ENCODE measurements at regions of chr22 and their contacts with region 1.

Region 1: DNA sequence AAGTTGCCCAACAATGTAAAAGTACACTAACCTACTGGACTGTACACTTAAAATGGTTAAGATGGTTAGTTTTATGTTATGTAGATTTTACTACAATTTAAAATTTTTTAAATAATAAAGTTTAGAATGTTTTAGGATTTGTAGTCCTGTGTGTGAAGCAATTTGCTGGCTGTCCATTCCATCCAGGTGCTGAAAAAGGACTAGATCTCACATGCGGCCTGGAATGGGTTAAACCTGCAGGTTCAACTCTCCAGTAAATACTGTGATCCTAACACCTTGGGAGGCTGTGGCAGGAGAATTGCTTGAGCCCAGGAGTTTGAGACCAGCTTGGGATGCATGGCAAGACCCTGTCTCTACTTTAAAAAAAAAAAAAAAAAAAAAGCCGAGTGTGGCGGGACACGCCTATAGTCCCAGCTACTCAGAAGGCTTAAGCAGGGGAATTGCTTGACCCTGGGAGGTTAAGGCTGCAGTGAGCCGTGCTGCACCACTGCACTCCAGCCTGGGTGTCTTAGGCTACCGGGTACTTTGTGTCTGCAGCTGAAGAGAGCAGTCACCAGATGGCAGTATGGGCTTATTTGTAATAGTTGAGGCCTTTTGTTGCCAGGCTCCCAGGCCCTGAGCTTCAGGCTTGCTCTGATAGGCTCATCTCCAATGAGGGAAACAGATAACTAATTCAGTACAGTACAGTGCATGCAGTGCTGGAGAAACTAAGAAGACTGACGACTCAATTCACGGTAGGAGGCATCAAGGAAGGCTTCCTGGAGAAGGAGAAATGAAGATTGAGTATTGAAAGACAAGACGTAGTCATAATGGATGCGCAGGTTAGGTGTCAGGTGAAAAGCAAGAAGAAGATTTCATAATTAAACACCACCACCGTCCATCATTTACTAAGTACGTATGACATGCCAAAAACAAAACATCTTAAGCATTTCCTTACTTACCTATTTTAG is 64.7 kb upstream of the ASPHD2 start:
- DNase-seq: peak; percentile 75
- H3K4me3 ChIP-seq: no peak overlapping the region
- H3K27ac ChIP-seq: no peak overlapping the region
- H3K4me1 ChIP-seq: no peaks in the 10 kb centered on the region
- H3K27me3 ChIP-seq: peaks cover 0 to 4% of the 10 kb centered on the region in 2 experiments
- CTCF ChIP-seq: peak; percentile 59 to 77
- POLR2A ChIP-seq: no peak

Region 2: DNA sequence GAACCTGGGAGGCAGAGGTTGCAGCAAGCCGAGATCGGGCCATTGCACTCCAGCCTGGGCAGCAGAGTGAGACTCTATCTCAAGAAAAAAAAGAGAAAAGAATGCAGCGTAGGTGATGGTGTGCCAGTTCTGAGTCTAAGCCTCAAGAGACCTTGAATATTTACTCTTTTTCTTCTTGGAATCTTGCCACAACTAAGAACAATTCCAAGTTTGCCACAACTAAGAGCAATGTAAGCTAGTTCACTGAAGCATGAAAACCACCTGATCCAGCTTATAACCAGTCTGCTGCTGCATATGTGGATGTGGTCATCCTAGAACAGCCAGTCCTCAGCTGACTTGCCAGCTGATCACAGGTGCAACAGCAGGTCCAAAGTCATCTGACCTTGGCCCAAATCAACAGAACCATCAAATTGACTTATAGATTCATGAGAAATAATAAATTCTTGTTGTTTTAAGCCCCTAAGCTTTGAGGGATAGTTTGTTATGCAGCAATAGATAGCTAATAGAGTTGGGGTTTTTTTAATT is 220.5 kb before region 1 on chr22:
- CTCF ChIA-PET with region 1: no interaction called
- POLR2A ChIA-PET with region 1: no interaction called
- dilution Hi-C with region 1: no loop called
- intact Hi-C with region 1: no loop called
- DNase-seq: no peak
- H3K4me3 ChIP-seq: no peak overlapping the region
- H3K27ac ChIP-seq: no peak overlapping the region
- H3K4me1 ChIP-seq: no peaks in the 10 kb centered on the region
- H3K27me3 ChIP-seq: no peaks in the 10 kb centered on the region
- CTCF ChIP-seq: no peak
- POLR2A ChIP-seq: no peak

Region 3: DNA sequence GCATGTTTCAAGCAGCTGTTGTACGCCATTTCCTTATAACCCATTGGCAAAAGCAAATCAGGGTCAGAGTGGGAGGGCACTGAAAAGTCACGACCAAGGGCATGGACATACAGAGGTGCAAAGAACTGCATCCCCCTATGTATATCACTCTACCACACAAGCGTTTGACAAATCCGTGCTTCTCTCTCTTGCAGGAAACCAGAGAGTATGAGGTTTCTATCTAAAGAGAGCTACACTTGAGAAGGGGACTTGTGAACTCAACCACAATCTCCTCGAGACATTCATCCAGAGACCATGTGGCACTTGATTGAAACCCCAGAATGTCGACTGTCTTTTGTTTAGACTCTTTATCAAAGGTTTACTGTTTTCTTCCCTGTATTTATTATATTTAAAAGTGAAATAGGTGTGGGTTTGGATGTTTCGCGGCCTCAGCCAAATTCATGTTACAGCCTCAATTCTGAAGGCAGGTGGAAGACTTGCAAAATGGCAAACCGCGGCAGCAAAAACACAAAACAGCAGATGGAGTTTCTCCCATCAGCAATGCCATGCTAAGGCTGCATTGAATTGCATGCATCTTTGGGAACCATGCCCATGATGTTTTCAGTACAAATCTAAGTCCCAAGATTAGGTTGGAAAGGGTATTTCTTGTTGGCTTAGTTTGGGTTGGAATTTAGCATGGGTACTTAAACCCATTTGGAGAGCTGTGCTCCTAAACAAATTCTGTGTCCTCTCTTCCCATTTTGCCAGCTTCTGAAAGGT is 15.9 kb after region 1 on chr22:
- CTCF ChIA-PET with region 1: interaction called, 25 read pairs
- POLR2A ChIA-PET with region 1: no interaction called
- dilution Hi-C with region 1: no loop called
- intact Hi-C with region 1: no loop called
- DNase-seq: no peak
- H3K4me3 ChIP-seq: no peak overlapping the region
- H3K27ac ChIP-seq: no peak overlapping the region
- H3K4me1 ChIP-seq: no peaks in the 10 kb centered on the region
- H3K27me3 ChIP-seq: peaks cover 13% of the 10 kb centered on the region in 2 experiments
- CTCF ChIP-seq: no peak
- POLR2A ChIP-seq: no peak

Region 4: GRCh38 chr22:26398741-26399153 is 34.4 kb after region 1 on chr22:
- CTCF ChIA-PET with region 1: interaction called, 9 read pairs
- POLR2A ChIA-PET with region 1: no interaction called
- dilution Hi-C with region 1: no loop called
- intact Hi-C with region 1: loop called (anchors 1 kb)
- DNase-seq: peak; percentile 72
- H3K4me3 ChIP-seq: no peak overlapping the region
- H3K27ac ChIP-seq: no peak overlapping the region
- H3K4me1 ChIP-seq: no peaks in the 10 kb centered on the region
- H3K27me3 ChIP-seq: peaks cover 4 to 8% of the 10 kb centered on the region in 2 experiments
- CTCF ChIP-seq: peak; percentile 68 to 72
- POLR2A ChIP-seq: no peak

Region 5: GRCh38 chr22:26428515-26429457 is 64.4 kb after region 1 on chr22 and contains the start of gene ASPHD2:
- CTCF ChIA-PET with region 1: interaction called, 12 read pairs
- POLR2A ChIA-PET with region 1: no interaction called
- dilution Hi-C with region 1: no loop called
- intact Hi-C with region 1: no loop called
- DNase-seq: peak; percentile 64
- H3K4me3 ChIP-seq: peak within 1 kb of the TSS; percentile 17 to 69 (median 55)
- H3K27ac ChIP-seq: peak within 1 kb of the TSS; percentile 6
- H3K4me1 ChIP-seq: peaks cover 14% of the 10 kb centered on the region
- H3K27me3 ChIP-seq: peaks cover 5 to 17% of the 10 kb centered on the region in 2 experiments
- CTCF ChIP-seq: no peak
- POLR2A ChIP-seq: peak; percentile 69
- total RNA-seq, gene ASPHD2: 5.5 and 7.8 TPM in 2 replicates

Region 6: DNA sequence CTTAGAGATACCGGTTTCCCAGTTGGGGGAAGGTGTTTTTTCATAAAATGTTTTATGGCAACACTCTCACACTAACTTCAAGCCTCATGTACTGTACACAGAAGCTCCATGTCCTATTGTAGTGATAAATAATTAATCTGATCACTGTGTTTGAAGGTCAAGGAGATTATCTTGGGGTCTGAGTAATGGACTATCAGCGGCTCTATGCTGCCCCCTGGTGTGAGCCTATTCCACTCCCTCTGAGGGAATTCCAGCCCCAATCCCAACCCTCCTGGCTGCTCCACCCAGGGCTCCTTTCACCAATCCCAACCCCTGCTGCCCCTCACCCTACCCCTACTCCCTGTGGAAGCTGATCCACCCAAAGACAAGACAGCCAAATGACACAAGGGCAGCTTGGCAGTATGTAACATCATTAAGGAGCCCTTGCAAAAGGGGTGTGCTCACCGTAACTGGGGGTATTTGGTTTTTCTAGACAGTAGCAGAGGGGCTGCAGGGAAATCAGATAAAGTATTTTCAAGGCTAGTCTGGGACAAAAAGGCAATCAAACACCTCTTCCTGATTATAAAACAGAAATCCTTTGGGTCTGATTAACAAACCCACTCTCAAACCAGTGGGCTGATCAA is 97.0 kb after region 1 on chr22:
- CTCF ChIA-PET with region 1: interaction called, 148 read pairs
- POLR2A ChIA-PET with region 1: no interaction called
- dilution Hi-C with region 1: no loop called
- intact Hi-C with region 1: loop called (anchors 1 kb)
- DNase-seq: peak; percentile 53
- H3K4me3 ChIP-seq: no peak overlapping the region
- H3K27ac ChIP-seq: no peak overlapping the region
- H3K4me1 ChIP-seq: peaks cover 13% of the 10 kb centered on the region
- H3K27me3 ChIP-seq: no peaks in the 10 kb centered on the region
- CTCF ChIP-seq: peak; percentile 75 to 90
- POLR2A ChIP-seq: no peak

Region 7: GRCh38 chr22:26665813-26666231 is 301.5 kb after region 1 on chr22:
- CTCF ChIA-PET with region 1: interaction called, 51 read pairs
- POLR2A ChIA-PET with region 1: no interaction called
- dilution Hi-C with region 1: no loop called
- intact Hi-C with region 1: loop called (anchors 1 kb)
- DNase-seq: no peak
- H3K4me3 ChIP-seq: no peak overlapping the region
- H3K27ac ChIP-seq: no peak overlapping the region
- H3K4me1 ChIP-seq: no peaks in the 10 kb centered on the region
- H3K27me3 ChIP-seq: peaks cover 6 to 12% of the 10 kb centered on the region in 2 experiments
- CTCF ChIP-seq: no peak
- POLR2A ChIP-seq: no peak

Region 8: DNA sequence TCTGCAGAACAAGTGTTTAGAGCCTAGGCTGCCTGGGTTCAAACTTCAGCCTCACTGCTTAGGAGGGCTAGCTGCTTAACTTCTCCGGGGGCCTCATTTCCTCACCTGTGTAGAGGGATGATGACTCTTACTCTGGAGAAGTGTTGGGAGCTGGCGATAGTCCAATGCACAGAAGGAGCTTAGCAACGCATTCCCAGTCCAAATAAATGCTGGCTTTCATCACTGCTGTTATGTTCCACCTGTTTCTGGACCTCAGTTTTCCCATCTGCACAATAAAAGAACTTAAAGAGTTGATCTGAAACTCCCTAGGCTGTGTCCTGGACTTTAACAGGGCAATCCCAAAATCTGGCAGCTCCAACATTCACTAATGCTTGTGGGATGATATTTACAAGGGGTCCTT is 630.9 kb after region 1 on chr22:
- CTCF ChIA-PET with region 1: no interaction called
- POLR2A ChIA-PET with region 1: no interaction called
- dilution Hi-C with region 1: no loop called
- intact Hi-C with region 1: no loop called
- DNase-seq: no peak
- H3K4me3 ChIP-seq: no peak overlapping the region
- H3K27ac ChIP-seq: no peak overlapping the region
- H3K4me1 ChIP-seq: no peaks in the 10 kb centered on the region
- H3K27me3 ChIP-seq: peaks cover 0 to 3% of the 10 kb centered on the region in 2 experiments
- CTCF ChIP-seq: no peak
- POLR2A ChIP-seq: no peak